Endothelial cell of umbilical vein (primary cell): ENCODE measurements at regions of chr16 and their contacts with region 1.

Region 1: GRCh38 chr16:77190478-77191258 is at the start of gene MON1B:
- DNase-seq: peak; percentile 99
- H3K4me3 ChIP-seq: peak within 1 kb of the TSS; percentile 66 to 91 (median 70)
- H3K27ac ChIP-seq: peak within 1 kb of the TSS; percentile 82
- H3K4me1 ChIP-seq: peaks cover 12% of the 10 kb centered on the region
- H3K27me3 ChIP-seq: peaks cover 2% of the 10 kb centered on the region in 2 experiments
- CTCF ChIP-seq: no peak
- POLR2A ChIP-seq: peak; percentile 74
- total RNA-seq, gene MON1B: 50.1 and 57.0 TPM in 2 replicates

Region 2: DNA sequence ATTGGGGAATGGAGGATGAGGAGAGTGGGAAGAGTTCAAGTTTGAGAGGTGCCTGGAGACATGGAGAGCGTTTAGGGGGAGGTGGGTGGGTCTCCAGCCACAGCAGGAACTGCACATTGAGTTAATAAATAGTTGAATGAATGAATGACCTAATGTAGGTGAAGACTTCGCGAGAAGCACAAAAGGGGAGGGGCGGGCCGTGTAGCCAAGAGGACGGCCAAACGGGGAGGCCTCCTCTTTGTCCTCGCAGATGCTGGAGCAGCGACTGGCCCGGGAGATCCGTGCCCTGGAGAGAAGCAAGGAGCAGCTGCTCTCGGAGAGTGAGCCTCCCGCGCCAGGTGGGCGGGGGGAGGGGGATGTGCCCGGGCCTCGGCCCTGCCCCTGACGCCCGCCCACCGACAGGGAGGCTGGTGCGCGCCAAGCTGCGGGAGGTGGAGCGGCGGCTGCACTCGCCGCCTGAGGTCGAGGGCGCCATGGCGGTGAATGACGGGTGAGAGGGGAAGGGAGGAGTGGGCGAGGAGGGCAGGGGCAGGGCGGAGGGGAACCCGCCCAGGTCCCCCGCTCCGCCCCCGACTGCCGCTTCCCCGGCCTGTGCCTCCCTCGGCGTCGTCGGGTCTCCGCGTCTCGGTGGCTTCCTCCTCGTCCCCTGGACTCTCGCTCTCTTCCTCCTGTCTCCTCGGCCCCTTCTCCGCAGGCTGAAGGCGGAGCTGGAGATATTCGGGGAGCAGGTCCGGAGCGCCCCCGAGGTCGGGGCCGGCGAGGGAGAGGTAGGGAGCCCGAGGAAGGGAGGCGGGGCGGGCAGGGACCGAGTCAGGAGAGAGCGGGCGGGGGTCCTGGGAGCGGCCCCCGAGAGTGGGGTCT is 21.4 kb after region 1 on chr16:
- CTCF ChIA-PET with region 1: no interaction called
- POLR2A ChIA-PET with region 1: no interaction called
- dilution Hi-C with region 1: no loop called
- intact Hi-C with region 1: loop called (anchors 1 kb)
- DNase-seq: peak; percentile 48
- H3K4me3 ChIP-seq: peak overlapping the region; percentile 43 to 70 (median 57)
- H3K27ac ChIP-seq: peak overlapping the region; percentile 48
- H3K4me1 ChIP-seq: peaks cover 17% of the 10 kb centered on the region
- H3K27me3 ChIP-seq: no peaks in the 10 kb centered on the region
- CTCF ChIP-seq: no peak
- POLR2A ChIP-seq: no peak

Region 3: DNA sequence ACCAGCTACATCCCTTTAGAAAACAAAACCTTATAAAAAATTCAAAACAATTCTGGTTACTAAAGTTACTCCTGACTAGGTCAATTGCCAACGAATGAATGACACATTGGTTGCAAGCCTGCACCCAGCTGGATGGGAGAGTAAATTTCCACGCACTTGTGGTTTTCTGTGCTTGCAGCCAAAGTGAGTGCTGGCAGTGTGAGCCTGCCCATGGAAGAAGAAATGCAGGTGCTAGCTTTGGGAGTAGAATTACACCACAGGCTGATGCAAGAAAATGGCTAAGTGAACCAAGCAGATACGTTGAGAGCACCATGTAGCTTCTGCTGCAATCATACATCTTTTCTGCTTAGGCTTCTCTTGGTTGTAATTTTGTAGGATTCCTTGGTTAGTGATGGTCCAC is 83.1 kb after region 1 on chr16:
- CTCF ChIA-PET with region 1: no interaction called
- POLR2A ChIA-PET with region 1: no interaction called
- dilution Hi-C with region 1: no loop called
- intact Hi-C with region 1: no loop called
- DNase-seq: no peak
- H3K4me3 ChIP-seq: no peak overlapping the region
- H3K27ac ChIP-seq: no peak overlapping the region
- H3K4me1 ChIP-seq: no peaks in the 10 kb centered on the region
- H3K27me3 ChIP-seq: no peaks in the 10 kb centered on the region
- CTCF ChIP-seq: no peak
- POLR2A ChIP-seq: no peak

Region 4: DNA sequence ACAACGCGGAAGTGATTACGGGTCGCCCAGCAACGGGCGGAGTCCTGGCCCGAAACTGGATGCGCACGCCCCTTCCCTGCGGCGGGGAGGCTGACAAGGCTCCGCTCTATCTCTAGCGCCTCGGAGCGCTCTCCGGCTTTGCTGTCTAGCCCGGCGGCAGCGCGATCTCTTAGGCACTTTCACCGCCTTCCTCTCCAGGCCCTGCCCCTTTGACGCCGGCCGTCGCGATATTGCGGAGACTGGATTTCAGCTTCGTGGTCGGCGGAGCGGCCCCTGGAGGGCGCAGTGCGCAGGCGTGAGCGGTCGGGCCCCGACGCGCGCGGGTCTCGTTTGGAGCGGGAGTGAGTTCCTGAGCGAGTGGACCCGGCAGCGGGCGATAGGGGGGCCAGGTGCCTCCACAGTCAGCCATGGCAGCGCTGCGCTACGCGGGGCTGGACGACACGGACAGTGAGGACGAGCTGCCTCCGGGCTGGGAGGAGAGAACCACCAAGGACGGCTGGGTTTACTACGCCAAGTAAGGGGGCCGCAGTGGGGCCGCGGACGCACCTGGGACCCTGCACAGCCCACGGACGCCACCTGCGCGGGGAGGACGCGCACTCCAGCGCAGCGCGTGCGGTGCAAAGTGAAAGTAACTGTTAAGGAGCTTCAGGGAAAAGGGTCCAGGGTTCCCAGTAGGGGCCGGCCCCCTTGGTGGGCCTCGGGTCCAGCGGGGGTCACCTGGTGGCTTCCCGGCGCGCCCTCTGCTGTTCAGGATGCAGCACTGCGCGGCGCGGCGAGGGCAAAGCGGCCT is 908.9 kb after region 1 on chr16 and contains the start of gene WWOX:
- CTCF ChIA-PET with region 1: no interaction called
- POLR2A ChIA-PET with region 1: no interaction called
- dilution Hi-C with region 1: no loop called
- intact Hi-C with region 1: loop called (anchors 1 kb)
- DNase-seq: peak; percentile 99
- H3K4me3 ChIP-seq: peak within 1 kb of the TSS; percentile 47 to 79 (median 54)
- H3K27ac ChIP-seq: peak within 1 kb of the TSS; percentile 55
- H3K4me1 ChIP-seq: peaks cover 9% of the 10 kb centered on the region
- H3K27me3 ChIP-seq: no peaks in the 10 kb centered on the region
- CTCF ChIP-seq: peak; percentile 87 to 96
- POLR2A ChIP-seq: no peak
- total RNA-seq, gene WWOX: 12.0 and 12.5 TPM in 2 replicates